ENCODE measurements at regions of chr1 and their contacts with region 1.

Region 1: DNA sequence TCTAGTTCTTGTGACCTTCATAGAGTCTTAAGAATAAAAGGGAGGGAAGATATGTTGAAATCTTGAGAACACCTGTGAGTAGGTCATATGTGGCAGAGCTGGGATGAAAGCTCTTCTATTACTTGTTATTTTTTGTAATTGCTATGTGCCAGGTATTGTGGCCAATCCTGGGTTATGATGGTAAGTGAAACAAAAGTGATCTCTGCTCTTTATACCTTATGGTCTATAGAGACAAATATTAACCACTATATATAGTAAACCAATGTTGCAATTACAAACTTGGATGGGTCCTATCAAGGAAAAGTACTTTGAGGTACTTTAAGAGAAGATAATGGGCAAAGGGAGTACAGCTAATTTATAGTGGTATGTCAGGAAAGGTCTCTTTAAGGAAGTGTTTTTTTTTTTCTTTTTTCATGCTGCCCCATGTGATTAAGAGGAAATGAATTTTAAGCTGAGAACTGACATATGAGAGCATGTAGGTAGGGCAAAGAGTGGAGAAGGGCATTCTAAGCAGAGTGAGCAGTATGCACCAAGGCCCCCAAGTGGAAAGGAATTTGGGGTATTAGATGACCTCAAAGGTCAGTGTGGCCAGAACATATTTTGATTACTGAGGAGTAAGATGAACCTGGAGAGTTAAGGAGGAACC is 43.3 kb downstream of the POU2F1 start:
- DNase-seq: no peak
- ATAC-seq: no peak
- H3K4me3 ChIP-seq: no peak overlapping the region
- H3K27ac ChIP-seq: no peak overlapping the region
- H3K4me1 ChIP-seq: peaks cover 12% of the 10 kb centered on the region
- H3K27me3 ChIP-seq: no peaks in the 10 kb centered on the region

Region 2: DNA sequence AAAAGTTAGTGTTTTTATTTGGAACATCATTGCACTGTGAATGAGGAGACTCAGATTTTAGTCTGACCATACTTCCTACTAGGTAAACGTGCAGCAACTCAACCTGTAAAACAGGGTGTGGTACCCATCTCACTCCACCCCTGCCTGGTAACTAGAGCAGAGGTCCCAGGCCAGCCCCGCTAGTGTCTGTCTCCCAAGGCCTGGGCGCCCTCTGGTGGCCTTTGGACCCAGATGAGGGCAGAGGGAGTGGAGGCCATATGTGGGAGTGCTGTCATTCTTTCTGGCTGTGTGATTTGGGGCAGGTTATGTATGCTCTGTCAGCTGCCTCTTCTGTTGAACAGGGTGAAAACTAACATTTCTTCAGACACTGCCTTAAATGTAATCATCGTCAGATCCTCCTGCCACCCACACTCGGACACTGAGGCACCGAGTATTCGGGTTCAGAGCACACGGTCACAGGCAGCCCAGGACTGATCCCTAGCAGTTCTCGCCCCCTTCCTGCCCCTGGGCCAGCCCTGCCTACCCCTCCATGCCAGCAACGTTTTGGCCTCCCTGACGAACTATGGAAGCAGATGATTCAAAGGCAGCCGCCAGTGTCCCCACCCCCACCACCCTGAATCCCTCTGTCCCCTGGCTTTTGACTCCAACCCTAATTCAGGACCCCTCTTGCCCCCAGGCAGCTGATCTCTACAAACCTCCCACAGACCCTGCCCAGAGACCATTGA is 178.3 kb after region 1 on chr1:
- intact Hi-C with region 1: loop called (anchors 2 to 5 kb)
- DNase-seq: peak; percentile 86 to 96 (median 93)
- ATAC-seq: peak; percentile 91 to 93
- H3K4me3 ChIP-seq: no peak overlapping the region
- H3K27ac ChIP-seq: no peak overlapping the region
- H3K4me1 ChIP-seq: no peaks in the 10 kb centered on the region
- H3K27me3 ChIP-seq: no peaks in the 10 kb centered on the region

Region 3: DNA sequence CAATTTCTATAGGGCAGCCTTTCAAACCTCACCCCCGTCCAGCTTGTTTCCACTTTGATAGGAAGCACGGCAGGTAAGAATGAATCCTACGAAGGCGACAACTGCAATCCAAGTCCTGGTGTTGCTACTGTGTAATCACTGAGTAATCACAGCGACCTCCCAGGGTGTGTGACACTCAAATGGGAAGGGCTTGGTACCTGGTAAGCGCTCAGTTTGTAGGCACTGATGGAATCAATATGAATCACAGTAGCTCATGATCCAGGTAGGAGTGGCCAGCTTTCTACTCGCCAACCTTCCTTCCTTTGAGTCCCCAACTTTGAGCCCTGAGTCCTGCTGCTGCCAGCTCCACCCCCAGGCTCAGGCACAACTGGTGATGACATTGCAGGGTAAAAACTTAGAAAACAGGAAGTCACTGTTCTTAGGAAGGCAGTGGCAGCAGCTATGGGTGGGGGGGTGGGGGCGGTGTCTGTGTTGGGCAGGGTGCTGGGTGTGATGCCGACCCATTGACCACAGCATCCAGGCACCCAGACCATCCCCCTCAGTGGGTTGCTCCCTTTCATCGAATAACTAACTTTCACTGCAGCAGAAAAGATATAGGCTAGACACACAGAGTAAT is 183.7 kb after region 1 on chr1:
- intact Hi-C with region 1: loop called (anchors 2 to 5 kb)
- DNase-seq: peak in 1 of 3 donors; percentile 67
- ATAC-seq: peak; percentile 35 to 52
- H3K4me3 ChIP-seq: no peak overlapping the region
- H3K27ac ChIP-seq: no peak overlapping the region
- H3K4me1 ChIP-seq: no peaks in the 10 kb centered on the region
- H3K27me3 ChIP-seq: no peaks in the 10 kb centered on the region

Region 4: DNA sequence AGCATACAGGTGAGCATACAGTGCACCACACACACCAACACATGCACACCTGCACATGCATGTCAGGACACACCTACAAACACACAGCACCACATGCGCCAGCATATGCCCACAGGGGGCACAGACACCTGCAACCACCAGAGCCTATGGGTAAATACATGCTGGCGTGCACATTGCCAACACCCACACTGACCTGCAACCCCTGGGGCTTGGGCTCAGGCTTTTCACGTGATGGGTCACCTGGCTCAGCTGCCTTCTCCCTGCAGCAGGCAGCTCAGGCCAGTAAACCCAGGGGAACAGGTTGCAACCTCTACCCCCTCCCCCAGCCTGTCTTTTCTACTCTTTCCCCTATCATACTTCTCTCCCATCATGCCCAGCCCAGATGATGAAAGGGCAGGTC is 246.3 kb after region 1 on chr1:
- intact Hi-C with region 1: no loop called
- DNase-seq: no peak
- ATAC-seq: no peak
- H3K4me3 ChIP-seq: no peak overlapping the region
- H3K27ac ChIP-seq: no peak overlapping the region
- H3K4me1 ChIP-seq: no peaks in the 10 kb centered on the region
- H3K27me3 ChIP-seq: no peaks in the 10 kb centered on the region

Measured in right cardiac atrium (tissue), 5 donors.